ENCODE measurements at regions of chr1 and their contacts with region 1.

Region 1: DNA sequence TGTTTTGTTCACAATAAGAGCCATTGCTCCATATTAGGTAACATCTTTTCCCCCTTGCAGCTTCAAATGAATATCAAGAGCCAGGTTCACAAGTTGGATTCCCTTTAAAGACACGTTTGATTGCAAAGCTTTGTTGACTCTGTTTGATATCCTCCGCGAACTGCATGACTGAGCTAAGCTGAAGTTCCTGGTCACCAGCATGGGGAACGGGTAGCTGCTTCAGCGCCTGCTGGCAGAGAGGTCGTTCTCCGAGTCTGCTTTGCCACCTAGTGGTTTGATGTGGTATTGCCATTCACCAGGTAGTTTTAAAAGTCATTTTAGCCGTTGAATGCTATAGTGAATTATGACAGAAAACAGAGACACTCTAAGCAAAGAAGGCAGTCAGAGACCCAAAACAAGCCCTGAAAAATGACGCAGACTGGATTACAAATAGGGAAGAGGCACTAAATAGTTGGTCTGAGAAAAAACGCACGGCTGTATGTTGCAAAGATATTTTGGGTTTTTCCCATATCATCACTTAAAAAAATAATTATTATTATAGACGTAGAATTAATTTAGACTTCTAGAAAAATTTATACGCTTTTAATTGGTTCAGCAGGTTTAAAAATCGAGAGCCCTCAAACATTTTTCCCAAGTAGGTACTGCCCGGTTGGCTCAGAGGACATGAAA is 193.5 kb upstream of the FMN2 start:
- DNase-seq: peak; percentile 68
- CTCF ChIP-seq: peak; percentile 90

Region 2: GRCh38 chr1:239884796-239885195 is 13.4 kb before region 1 on chr1:
- CTCF ChIA-PET with region 1: interaction called, 20 read pairs
- POLR2A ChIA-PET with region 1: no interaction called
- DNase-seq: no peak
- CTCF ChIP-seq: no peak

Region 3: DNA sequence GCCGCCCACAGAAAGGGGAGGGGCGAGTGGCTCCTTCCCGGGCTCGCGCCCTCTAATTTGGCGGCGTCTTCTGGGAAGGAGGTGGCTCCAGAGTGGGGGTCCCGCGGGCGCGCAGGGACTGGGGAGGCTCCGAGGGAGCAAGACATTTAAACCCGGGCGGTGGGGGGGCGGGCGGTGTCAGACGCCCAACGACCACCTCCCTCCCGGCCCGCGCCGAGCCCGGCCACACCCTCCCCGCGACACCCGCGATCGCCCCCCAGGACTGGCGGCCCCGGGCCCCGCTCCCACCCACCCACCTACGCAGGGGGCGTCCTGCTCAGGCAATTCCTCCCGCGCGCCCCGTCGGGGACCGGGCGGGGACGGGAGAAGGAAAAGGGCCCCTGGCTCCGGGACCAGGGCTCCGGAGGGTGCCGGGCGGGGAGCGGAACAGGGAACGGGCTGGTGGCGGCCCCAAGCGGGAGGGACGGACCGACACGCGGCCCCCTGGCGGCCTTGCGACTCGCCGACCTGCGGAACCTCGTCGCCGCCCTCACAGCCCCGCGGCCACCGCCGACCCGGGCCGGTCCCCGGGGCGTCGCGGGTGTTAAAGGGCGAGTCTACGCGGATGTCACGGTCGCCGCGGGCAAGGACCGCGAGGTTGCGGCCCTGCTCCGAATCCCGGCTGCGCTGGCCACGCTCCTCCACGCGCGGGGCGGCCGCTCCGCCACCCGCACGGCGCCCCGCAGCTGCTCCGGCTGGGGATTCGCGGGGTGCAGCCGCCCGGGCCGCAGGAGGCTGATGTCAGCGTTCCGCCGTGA is 99.5 kb after region 1 on chr1:
- CTCF ChIA-PET with region 1: no interaction called
- POLR2A ChIA-PET with region 1: no interaction called
- DNase-seq: no peak
- CTCF ChIP-seq: no peak

Measured in GM10248 (cell line).